Lower leg skin (tissue), 4 donors: ENCODE measurements at regions of chr3 and their contacts with region 1.

Region 1: GRCh38 chr3:157786259-157787017 is 283.2 kb upstream of the VEPH1 start:
- DNase-seq: no peak
- H3K4me3 ChIP-seq: no peak overlapping the region
- CTCF ChIP-seq: no peak
- POLR2A ChIP-seq: no peak

Region 2: DNA sequence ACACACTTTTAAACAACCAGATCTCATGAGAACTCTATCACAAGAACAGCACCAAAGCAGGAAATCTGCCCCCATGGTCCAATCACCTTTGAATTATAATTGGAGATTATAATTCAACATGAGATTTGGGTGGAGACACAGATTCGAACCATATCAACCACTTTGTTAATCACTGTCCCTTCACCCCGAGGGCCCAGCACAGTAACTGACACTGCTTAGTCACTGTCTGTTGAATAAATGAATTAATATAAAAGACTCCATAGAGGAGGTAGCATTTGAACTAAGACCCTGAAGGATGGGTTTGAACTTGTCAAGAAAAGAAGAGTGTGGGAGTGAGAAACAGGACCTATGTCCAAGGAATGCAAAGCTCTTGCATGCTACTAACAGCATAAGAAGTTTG is 43.3 kb after region 1 on chr3:
- intact Hi-C with region 1: loop called (anchors 2 kb)
- DNase-seq: no peak
- H3K4me3 ChIP-seq: no peak overlapping the region
- CTCF ChIP-seq: no peak
- POLR2A ChIP-seq: no peak